GM10248 (cell line): ENCODE measurements at regions of chr3 and their contacts with region 1.

Region 1: GRCh38 chr3:73508330-73508954 is 116.3 kb downstream of the PDZRN3 start:
- DNase-seq: peak; percentile 56
- CTCF ChIP-seq: peak; percentile 75

Region 2: DNA sequence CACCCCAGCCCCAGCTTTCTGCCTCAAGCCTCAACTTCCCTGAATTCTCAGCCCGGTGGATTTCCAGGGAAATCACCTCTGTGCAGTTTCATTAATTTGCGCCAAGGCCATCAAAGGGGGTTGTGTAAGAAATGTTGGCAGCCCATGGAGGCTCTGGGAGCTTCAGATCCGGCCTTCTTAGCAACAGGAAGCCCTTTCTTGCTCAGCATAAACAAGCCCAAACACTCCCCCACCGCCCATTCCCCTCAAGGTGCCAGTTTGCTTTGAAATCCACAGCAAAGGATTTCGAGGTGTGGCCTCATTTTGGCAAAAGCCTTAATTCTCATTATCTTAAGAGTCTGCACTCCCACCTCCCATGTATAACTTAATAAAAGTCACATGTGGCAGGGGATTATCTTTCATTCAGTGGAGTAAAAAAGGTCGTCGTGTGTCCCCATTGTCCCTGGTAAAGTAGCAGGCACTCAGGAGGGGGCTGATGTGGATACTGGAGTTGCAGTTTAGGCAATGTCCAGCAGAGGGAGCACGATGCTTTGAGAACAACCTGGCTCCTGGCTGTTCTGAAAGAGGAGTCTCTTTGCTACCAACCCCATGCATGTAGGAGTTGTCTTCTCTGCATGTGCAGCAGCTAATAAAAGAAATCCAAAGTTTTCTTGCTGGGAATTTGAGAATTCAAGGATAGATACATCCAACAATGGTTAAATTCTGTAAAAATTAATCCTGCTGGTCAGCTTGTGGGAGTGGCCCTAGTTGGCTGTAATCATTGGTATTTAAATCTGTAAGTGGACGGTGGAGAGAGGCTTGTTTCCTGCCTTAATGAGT is 407.5 kb before region 1 on chr3:
- CTCF ChIA-PET with region 1: interaction called, 139 read pairs
- POLR2A ChIA-PET with region 1: no interaction called
- DNase-seq: peak; percentile 88
- CTCF ChIP-seq: peak; percentile 90

Region 3: DNA sequence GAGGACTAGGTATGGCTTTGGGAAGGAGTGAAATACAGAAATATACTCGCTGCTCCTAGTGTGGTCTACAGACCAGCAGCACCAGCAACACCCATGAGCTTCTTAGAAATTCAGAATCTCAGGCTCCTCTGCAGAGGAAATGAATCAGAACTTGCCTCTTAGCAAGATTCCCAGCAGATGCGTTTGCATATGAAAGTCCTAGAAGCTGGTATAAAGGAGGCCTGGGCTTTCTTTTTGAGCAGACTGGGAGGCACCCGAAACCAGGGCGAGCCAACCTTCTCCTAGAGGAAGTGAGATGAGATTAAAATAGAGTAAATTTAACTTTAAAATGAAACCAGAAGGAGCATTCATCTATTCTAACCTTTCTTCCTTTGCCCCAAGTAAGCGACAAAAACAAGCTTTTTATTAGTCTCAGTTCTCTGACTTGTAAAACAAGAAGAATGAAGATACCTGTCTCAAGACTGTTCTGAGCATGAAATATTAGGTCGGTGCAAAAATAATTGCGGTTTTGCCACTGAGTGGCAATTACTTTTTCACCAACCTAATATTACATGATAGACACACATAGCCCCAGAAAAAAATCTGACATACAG is 23.7 kb before region 1 on chr3:
- CTCF ChIA-PET with region 1: interaction called, 43 read pairs
- POLR2A ChIA-PET with region 1: no interaction called
- DNase-seq: no peak
- CTCF ChIP-seq: no peak

Region 4: DNA sequence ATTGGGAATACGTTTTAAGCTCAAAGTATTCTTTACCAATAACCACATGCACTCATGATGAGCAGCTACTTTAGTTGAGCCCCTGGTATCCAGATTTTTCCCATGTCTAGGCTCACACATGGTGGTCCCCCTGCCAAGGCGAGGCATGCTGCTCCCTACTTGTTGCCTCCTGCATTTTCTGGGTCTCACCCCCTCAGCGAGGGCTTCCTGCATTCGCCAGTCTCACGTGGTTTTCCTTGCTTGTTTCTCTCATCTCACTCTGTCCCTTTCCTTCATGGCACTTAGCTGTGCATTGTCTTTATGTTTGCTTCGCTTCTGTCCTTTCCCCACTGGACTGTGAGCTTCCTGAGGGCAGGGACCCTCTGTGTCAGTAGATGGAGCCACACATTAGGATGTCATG is 17.1 kb after region 1 on chr3:
- CTCF ChIA-PET with region 1: interaction called, 11 read pairs
- POLR2A ChIA-PET with region 1: no interaction called
- DNase-seq: no peak
- CTCF ChIP-seq: no peak

Region 5: GRCh38 chr3:73848173-73848906 is 339.9 kb after region 1 on chr3:
- CTCF ChIA-PET with region 1: interaction called, 11 read pairs
- POLR2A ChIA-PET with region 1: no interaction called
- DNase-seq: no peak
- CTCF ChIP-seq: peak; percentile 28